ENCODE measurements at regions of chr4 and their contacts with region 1.

Region 1: DNA sequence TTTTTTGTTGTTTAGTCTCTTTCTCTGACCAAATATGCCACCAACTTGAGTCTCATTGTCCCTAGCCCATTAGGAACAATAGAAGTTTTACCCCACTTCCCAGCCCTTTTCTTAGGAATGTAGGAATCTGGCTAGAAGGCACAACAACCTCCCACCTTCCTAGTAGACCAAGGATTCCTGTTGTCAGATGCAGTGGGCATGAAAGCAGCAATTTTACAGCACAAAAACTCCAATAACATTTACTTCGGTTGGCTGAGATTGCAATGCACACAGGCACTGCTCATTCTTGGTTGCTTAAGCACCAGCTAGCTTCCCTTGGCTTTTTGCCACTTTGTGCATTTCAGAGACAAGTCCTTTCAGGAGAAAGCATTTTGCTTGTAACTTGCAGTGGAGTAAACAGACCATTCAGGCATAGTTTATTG is 312.8 kb downstream of the TENM3 start:
- DNase-seq: peak; percentile 32

Region 2: DNA sequence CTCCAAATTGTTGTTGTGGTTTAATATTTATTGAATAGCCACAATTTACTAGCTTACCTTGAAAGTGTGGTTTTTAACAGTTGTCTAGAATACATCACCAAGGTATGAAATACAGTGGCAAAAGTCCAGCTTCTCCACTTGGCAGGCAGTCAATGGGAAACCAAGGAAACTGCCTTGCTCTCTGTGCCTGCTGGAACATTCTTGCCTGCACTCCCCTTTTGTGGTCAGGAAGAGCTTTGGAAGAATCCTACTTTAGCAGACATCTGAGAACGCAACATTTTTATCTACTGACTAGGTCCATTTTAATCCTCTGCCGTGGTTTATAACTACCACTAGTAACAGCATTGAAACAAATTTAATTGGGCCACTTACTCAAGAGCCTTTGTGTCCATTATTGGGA is 248.3 kb before region 1 on chr4:
- in situ Hi-C with region 1: no loop called
- DNase-seq: no peak

Region 3: DNA sequence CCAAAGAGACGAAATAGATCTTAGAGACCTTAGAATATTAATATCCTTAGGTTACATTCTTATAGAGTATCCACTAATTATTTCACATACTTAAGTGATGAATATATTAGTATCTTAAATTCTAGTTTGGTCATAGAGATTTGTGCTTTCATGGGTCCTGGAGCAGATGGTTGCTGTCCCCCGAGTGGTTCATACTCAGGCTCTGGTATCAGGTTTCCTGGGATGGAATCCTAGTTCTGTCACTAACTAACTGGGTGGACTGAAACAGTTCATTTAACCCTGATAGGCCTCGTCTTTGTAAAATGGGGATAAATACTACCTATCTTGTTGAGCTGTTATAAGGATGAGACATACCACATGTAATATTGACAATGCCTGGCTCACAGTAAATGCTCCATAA is 48.2 kb before region 1 on chr4:
- in situ Hi-C with region 1: loop called (anchors 10 kb)
- DNase-seq: no peak

Region 4: GRCh38 chr4:182619660-182620059 is 63.7 kb after region 1 on chr4:
- in situ Hi-C with region 1: no loop called
- DNase-seq: no peak

Region 5: DNA sequence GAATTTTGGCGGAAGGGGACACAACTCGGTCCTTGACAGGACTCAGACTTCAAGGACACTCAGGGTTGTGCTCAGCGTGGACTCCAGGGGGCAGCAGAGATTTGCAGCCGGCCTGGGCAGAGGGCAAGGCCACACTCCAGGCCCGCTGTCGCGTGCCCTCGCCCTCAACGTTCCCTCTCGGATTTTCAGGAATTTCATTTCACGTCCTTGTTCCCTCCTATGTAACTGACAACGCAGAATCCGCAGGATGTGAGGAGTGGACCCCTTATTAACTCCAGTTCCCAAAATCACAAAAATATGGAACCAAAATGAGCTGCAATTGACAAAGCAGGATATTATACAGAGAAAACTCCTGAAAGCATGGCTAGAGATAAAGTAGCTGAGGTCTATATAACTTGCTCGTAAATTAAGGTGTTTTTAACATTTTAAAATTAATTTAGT is 382.2 kb after region 1 on chr4:
- in situ Hi-C with region 1: no loop called
- DNase-seq: peak; percentile 83

Measured in SK-MEL-5 (cell line).